Endothelial cell of umbilical vein (primary cell): ENCODE measurements at regions of chr10 and their contacts with region 1.

Region 1: DNA sequence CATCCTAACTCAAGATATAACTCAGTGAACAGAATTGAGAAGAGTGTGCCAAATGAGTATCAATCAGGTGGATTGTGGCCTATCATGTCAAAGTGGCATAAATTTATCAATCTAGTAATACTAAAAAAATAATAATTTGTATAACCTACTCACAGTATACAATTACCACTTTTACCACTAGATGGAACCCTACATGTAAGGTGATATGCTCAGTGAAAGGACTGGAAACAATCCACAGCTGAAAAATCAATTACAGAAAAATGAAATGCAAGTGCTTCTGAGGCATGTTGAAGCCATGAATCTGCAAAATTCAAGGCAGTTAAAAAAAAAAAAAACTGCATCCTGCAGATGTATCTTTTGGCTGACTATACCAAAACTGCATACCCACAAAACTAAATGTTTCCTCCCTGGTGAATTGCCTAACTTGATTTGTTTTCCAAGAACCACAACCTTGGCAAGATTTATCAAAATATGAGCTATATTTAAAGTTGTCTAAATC is 13.9 kb downstream of the ARHGAP19 start:
- DNase-seq: peak; percentile 86
- H3K4me3 ChIP-seq: no peak overlapping the region
- H3K27ac ChIP-seq: no peak overlapping the region
- H3K4me1 ChIP-seq: peaks cover 4% of the 10 kb centered on the region
- H3K27me3 ChIP-seq: no peaks in the 10 kb centered on the region
- CTCF ChIP-seq: peak; percentile 30 to 41
- POLR2A ChIP-seq: no peak

Region 2: DNA sequence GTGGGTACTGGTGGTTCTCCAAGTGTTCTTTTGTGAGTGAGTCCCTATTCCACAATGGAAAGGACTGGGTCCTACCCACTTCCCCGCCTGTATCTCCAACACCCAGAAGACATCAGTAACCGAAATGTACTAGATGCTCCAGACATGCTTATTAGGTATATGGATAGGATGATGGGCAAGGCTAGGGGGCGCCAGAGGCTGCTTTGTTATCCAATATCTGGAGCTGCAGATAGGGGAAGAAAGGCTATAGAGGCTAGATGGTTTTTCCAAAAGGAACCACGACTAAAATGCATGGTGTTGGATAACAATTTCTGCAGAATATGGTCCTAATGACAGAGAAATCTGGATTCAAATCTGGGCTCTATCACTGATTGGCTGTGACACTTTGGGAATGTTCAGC is 635.6 kb before region 1 on chr10:
- CTCF ChIA-PET with region 1: no interaction called
- POLR2A ChIA-PET with region 1: no interaction called
- dilution Hi-C with region 1: no loop called
- intact Hi-C with region 1: no loop called
- DNase-seq: no peak
- H3K4me3 ChIP-seq: no peak overlapping the region
- H3K27ac ChIP-seq: no peak overlapping the region
- H3K4me1 ChIP-seq: no peaks in the 10 kb centered on the region
- H3K27me3 ChIP-seq: peaks cover 0 to 6% of the 10 kb centered on the region in 2 experiments
- CTCF ChIP-seq: peak; percentile 12 to 24
- POLR2A ChIP-seq: no peak

Region 3: DNA sequence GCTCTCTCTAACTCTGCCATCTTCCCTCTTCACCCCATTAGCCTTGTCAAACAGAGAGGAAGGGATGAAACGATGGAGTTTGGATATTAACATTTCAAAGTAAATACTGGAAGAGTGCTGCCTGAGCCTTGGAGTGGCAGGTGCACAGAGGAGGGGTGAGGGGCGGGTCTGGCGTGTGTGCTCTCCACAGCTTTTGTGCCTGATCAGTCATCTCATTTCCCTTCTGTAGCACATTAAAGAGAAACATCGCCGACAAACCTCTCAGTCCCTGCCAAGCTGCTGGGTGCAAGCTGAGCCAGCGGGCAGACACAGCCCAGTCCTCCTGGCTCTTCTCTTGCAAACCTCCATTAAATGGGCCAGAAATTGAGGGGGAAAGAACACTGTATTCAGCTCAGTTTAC is 169.0 kb before region 1 on chr10:
- CTCF ChIA-PET with region 1: no interaction called
- POLR2A ChIA-PET with region 1: no interaction called
- dilution Hi-C with region 1: no loop called
- intact Hi-C with region 1: no loop called
- DNase-seq: no peak
- H3K4me3 ChIP-seq: no peak overlapping the region
- H3K27ac ChIP-seq: no peak overlapping the region
- H3K4me1 ChIP-seq: no peaks in the 10 kb centered on the region
- H3K27me3 ChIP-seq: peaks cover 2 to 4% of the 10 kb centered on the region in 2 experiments
- CTCF ChIP-seq: no peak
- POLR2A ChIP-seq: no peak

Region 4: GRCh38 chr10:97318772-97319651 is 40.5 kb after region 1 on chr10 and contains the start of gene FRAT1:
- CTCF ChIA-PET with region 1: interaction called, 18 read pairs
- POLR2A ChIA-PET with region 1: interaction called, 3 read pairs
- dilution Hi-C with region 1: no loop called
- intact Hi-C with region 1: no loop called
- DNase-seq: peak; percentile 93
- H3K4me3 ChIP-seq: peak within 1 kb of the TSS; percentile 39 to 74 (median 58)
- H3K27ac ChIP-seq: peak within 1 kb of the TSS; percentile 95
- H3K4me1 ChIP-seq: peaks cover 15% of the 10 kb centered on the region
- H3K27me3 ChIP-seq: no peaks in the 10 kb centered on the region
- CTCF ChIP-seq: no peak
- POLR2A ChIP-seq: peak; percentile 26
- total RNA-seq, gene FRAT1: 3.2 and 3.5 TPM in 2 replicates

Region 5: GRCh38 chr10:97349752-97350513 is 71.4 kb after region 1 on chr10:
- CTCF ChIA-PET with region 1: interaction called, 79 read pairs
- POLR2A ChIA-PET with region 1: no interaction called
- dilution Hi-C with region 1: no loop called
- intact Hi-C with region 1: loop called (anchors 2 kb)
- DNase-seq: no peak
- H3K4me3 ChIP-seq: no peak overlapping the region
- H3K27ac ChIP-seq: no peak overlapping the region
- H3K4me1 ChIP-seq: no peaks in the 10 kb centered on the region
- H3K27me3 ChIP-seq: no peaks in the 10 kb centered on the region
- CTCF ChIP-seq: no peak
- POLR2A ChIP-seq: no peak

Region 6: DNA sequence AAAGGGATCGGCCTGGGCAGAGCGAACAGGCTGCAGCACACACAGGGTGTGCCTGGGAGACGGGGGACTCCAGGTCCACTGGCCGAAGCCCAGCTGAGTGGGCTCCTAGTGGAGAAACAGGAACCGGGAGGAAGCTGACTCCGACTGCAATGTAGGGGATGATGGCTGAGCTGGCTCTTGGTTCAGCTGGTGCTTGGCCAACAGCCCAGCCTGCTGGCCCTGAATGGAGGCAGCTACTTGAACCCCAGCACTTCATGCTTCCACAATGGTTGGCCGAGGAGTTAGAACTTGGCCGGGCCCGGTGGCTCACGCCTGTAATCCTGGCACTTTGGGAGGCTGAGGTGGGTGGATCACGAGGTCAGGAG is 83.0 kb after region 1 on chr10:
- CTCF ChIA-PET with region 1: interaction called, 79 read pairs
- POLR2A ChIA-PET with region 1: interaction called, 3 read pairs
- dilution Hi-C with region 1: no loop called
- intact Hi-C with region 1: no loop called
- DNase-seq: peak; percentile 34
- H3K4me3 ChIP-seq: no peak overlapping the region
- H3K27ac ChIP-seq: no peak overlapping the region
- H3K4me1 ChIP-seq: peaks cover 3% of the 10 kb centered on the region
- H3K27me3 ChIP-seq: no peaks in the 10 kb centered on the region
- CTCF ChIP-seq: no peak
- POLR2A ChIP-seq: no peak